Gastrocnemius medialis (tissue), 4 donors: ENCODE measurements at regions of chr9 and their contacts with region 1.

Region 1: GRCh38 chr9:113221003-113221799 is at the starts of genes FKBP15 and SLC31A1:
- DNase-seq: peak; percentile 96 to 98
- ATAC-seq: peak; percentile 99
- H3K4me3 ChIP-seq: peak within 1 kb of the TSS; percentile 80 to 97 (median 88)
- H3K27ac ChIP-seq: peak within 1 kb of the TSS; percentile 92 to 97 (median 94)
- H3K4me1 ChIP-seq: peaks cover 32 to 36% of the 10 kb centered on the region in 2 donors
- H3K27me3 ChIP-seq: no peaks in the 10 kb centered on the region
- CTCF ChIP-seq: no peak
- POLR2A ChIP-seq: peak; percentile 75 to 81
- total RNA-seq, gene FKBP15: 13.3 to 17.5 (median 14.5) TPM
- total RNA-seq, gene SLC31A1: 2.9 to 5.6 (median 4.3) TPM

Region 2: DNA sequence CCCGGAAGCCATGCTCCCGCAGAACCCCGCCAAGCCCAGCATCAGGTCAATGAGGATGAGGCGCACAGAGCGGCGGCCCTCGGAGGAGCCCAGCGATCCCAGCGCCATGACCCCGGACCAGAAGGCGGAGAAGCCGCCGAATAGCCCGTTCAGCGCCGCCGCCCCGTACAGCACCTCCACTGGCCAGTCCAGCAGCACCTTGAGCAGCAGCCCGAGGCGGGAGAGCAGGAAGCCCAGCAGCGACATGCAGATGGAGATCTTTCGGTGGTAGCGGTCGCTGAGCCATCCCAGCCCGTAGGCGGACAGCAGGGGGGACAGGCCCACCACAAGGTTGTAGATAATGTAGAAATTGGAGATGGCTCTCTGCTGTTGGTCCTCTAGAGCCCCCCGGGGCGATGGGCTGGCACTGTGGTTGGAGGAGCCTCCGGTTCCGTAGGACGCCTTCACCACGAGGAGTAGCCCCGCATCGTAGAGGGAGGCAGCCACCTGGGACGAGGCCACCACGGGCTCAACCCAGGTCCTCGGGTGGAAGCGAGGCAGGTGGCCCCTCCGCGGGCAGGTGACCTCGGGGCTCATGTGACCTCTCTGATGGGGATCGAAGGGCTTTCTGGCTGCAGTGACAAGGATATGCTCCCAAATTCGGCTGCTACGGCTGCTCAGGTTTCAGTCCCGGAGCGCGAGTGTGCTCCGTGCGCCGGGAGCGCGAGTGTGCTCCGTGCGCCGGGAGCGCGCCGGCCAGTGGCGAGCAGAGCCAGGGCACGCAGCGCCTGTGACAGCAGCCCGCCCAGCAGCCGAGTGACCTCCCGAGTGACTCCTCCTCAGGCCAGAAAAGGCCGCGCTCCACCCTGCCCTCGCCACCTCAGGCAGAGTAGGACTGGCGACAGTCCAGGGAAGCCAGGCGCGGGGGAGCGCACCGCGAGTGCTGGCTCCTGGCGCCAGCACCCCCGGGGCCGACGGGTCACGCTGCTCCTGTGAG is 330.8 kb before region 1 on chr9 and contains the start of gene SLC46A2:
- in situ Hi-C with region 1: no loop called
- intact Hi-C with region 1: no loop called
- DNase-seq: no peak
- ATAC-seq: no peak
- H3K4me3 ChIP-seq: peak within 1 kb of the TSS; percentile 38 to 46 (median 40)
- H3K27ac ChIP-seq: no peak within 1 kb of the TSS
- H3K4me1 ChIP-seq: no peaks in the 10 kb centered on the region
- H3K27me3 ChIP-seq: no peaks in the 10 kb centered on the region
- CTCF ChIP-seq: no peak
- POLR2A ChIP-seq: no peak
- total RNA-seq, gene SLC46A2: 0.13 TPM in 1 of 4 donors, not detected in the others

Region 3: DNA sequence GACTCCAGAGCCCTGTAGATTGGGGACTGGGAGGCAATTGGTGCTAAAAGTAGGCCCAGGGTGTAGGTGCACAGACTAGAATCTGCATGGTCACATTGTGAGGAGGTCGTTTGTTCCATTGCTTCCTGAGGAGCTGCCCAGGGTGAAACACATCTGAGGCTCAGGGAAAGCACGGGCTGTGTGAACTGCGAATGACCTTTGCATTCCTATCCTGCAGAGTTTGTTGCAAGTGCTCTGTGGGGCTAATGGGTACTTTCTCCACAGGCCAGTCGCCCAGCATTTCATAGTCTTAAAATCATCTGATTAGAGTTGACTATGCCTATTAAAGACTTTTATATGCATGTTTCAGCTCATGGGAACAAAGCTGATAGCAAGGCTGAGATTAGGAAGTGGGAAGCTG is 316.1 kb before region 1 on chr9:
- in situ Hi-C with region 1: no loop called
- intact Hi-C with region 1: no loop called
- DNase-seq: no peak
- ATAC-seq: no peak
- H3K4me3 ChIP-seq: no peak overlapping the region
- H3K27ac ChIP-seq: no peak overlapping the region
- H3K4me1 ChIP-seq: no peaks in the 10 kb centered on the region
- H3K27me3 ChIP-seq: no peaks in the 10 kb centered on the region
- CTCF ChIP-seq: no peak
- POLR2A ChIP-seq: no peak

Region 4: GRCh38 chr9:113005777-113006176 is 215.4 kb before region 1 on chr9:
- in situ Hi-C with region 1: no loop called
- intact Hi-C with region 1: no loop called
- DNase-seq: no peak
- ATAC-seq: no peak
- H3K4me3 ChIP-seq: no peak overlapping the region
- H3K27ac ChIP-seq: no peak overlapping the region
- H3K4me1 ChIP-seq: no peaks in the 10 kb centered on the region
- H3K27me3 ChIP-seq: no peaks in the 10 kb centered on the region
- CTCF ChIP-seq: no peak
- POLR2A ChIP-seq: no peak

Region 5: GRCh38 chr9:113150670-113151611 is 70.3 kb before region 1 on chr9 and contains the start of gene SLC31A2:
- in situ Hi-C with region 1: no loop called
- intact Hi-C with region 1: loop called (anchors 2 kb)
- DNase-seq: peak; percentile 81 to 86
- ATAC-seq: peak; percentile 81 to 82
- H3K4me3 ChIP-seq: peak within 1 kb of the TSS; percentile 95 to 99 (median 96)
- H3K27ac ChIP-seq: peak within 1 kb of the TSS; percentile 84 to 94 (median 92)
- H3K4me1 ChIP-seq: peaks cover 18 to 42% of the 10 kb centered on the region in 2 donors
- H3K27me3 ChIP-seq: no peaks in the 10 kb centered on the region
- CTCF ChIP-seq: peak in 3 of 5 experiments; percentile 23 to 32 (median 28)
- POLR2A ChIP-seq: peak; percentile 70 to 80
- total RNA-seq, gene SLC31A2: 17.5 to 29.6 (median 23.9) TPM

Region 6: DNA sequence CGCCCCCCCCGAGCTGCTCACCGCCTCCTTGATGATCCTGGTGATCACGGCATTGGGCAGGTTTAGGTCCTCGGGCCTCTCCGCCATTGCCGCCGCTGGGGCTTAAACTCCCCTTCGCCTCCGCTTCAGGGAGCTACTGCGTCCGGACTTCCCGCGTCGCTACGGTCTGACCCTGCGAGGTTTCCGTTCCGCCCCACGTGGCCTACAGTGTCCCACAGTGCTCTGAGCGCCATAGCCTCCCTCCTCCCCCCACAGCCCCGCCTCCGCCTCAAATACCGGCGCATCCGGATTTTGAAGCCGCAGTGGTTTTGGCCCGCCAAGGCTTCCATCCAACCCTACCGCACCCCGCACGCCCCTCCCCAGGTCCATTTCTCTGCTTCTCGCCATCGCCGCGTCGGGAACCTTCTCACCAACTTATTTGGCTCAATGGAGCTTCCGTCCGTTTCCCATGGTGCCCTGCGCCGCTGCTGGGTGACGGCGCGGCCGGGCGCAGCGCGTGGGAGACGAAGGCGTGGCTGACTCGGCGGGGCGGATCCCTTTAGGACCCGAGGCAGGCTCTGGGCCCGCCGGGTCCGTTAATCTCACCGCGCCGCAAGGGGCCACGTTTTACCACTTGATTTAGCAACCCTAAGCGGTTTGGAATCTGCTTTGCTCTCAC is 189.1 kb after region 1 on chr9 and contains the starts of genes C9orf43 and POLE3:
- in situ Hi-C with region 1: no loop called
- intact Hi-C with region 1: loop called (anchors 5 kb)
- DNase-seq: peak; percentile 90 to 91
- ATAC-seq: peak; percentile 96
- H3K4me3 ChIP-seq: peak within 1 kb of the TSS; percentile 67 to 98 (median 88)
- H3K27ac ChIP-seq: peak within 1 kb of the TSS; percentile 97 to 99 (median 98)
- H3K4me1 ChIP-seq: peaks cover 14 to 22% of the 10 kb centered on the region in 2 donors
- H3K27me3 ChIP-seq: no peaks in the 10 kb centered on the region
- CTCF ChIP-seq: peak in 2 of 5 experiments; percentile 43 to 71
- POLR2A ChIP-seq: peak; percentile 55 to 62
- total RNA-seq, gene C9orf43: not detected
- total RNA-seq, gene POLE3: 42.9 to 66.4 (median 57.8) TPM